Activated CD4-positive, alpha-beta T cell treated with anti-CD3 and anti-CD28 coated beads, Interleukin-2, amount 10 ng/mL, durations not matched to agents 24 days and 14 days (primary cell): ENCODE measurements at regions of chr11 and their contacts with region 1.

Region 1: DNA sequence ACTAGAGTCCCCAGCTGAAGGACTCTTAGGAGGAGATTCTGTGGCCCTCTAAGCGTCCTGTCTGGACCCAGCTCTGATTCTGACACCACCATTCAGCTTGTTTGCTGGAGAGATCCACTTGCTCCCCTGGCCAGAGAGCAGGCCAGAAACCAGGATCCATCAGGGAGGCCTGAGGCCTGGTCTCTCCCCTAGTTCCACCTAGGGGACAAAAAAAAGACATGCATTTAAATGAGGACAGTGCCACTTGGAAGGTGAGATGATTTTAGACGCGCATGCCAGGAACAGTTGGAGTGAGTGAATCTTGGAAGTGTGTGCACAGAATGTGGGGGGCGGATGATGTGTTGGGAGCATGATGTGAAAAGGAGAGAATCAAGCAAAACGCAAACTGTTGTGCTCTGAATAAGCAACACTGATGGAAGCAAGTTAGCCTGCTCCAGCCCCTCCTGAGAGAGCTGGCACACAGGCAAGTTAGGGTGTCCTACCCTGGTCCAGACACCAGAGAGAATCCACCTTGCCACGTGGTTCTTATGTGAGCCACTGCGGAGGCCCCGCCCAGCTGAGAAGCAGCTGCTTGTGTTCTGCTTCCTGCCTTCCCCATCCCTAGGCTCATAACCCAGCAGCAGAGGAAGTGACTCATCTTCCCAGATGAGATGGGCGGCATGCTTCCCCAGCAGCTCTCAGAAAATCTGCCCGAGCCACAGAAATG is 8.0 kb upstream of the SLCO2B1 start:
- DNase-seq: peak; percentile 93
- H3K4me3 Mint-ChIP-seq: peak overlapping the region; percentile 74
- H3K27ac Mint-ChIP-seq: peak overlapping the region; percentile 90
- H3K4me1 Mint-ChIP-seq: peaks cover 45% of the 10 kb centered on the region
- H3K27me3 Mint-ChIP-seq: peaks cover 9% of the 10 kb centered on the region

Region 2: GRCh38 chr11:75073459-75074190 is 69.2 kb before region 1 on chr11:
- intact Hi-C with region 1: no loop called
- DNase-seq: peak; percentile 39
- H3K4me3 Mint-ChIP-seq: no peak overlapping the region
- H3K27ac Mint-ChIP-seq: no peak overlapping the region
- H3K4me1 Mint-ChIP-seq: peaks cover 2% of the 10 kb centered on the region
- H3K27me3 Mint-ChIP-seq: peaks cover 35% of the 10 kb centered on the region

Region 3: GRCh38 chr11:75204685-75205563 is 62.1 kb after region 1 on chr11:
- intact Hi-C with region 1: loop called (anchors 1 kb)
- DNase-seq: peak; percentile 95
- H3K4me3 Mint-ChIP-seq: no peak overlapping the region
- H3K27ac Mint-ChIP-seq: no peak overlapping the region
- H3K4me1 Mint-ChIP-seq: no peaks in the 10 kb centered on the region
- H3K27me3 Mint-ChIP-seq: peaks cover 12% of the 10 kb centered on the region

Region 4: GRCh38 chr11:75248690-75249268 is 105.9 kb after region 1 on chr11:
- intact Hi-C with region 1: loop called (anchors 1 kb)
- DNase-seq: peak; percentile 96
- H3K4me3 Mint-ChIP-seq: no peak overlapping the region
- H3K27ac Mint-ChIP-seq: no peak overlapping the region
- H3K4me1 Mint-ChIP-seq: peaks cover 3% of the 10 kb centered on the region
- H3K27me3 Mint-ChIP-seq: peaks cover 31% of the 10 kb centered on the region

Region 5: GRCh38 chr11:75328426-75329277 is 185.8 kb after region 1 on chr11:
- intact Hi-C with region 1: no loop called
- DNase-seq: peak; percentile 88
- H3K4me3 Mint-ChIP-seq: peak overlapping the region; percentile 67
- H3K27ac Mint-ChIP-seq: peak overlapping the region; percentile 77
- H3K4me1 Mint-ChIP-seq: peaks cover 56% of the 10 kb centered on the region
- H3K27me3 Mint-ChIP-seq: no peaks in the 10 kb centered on the region